Activated CD4-positive, alpha-beta T cell treated with anti-CD3 and anti-CD28 coated beads for 36 hours (primary cell): ENCODE measurements at regions of chr12 and their contacts with region 1.

Region 1: GRCh38 chr12:96177013-96177412 is 17.2 kb upstream of the ELK3 start:
- DNase-seq: peak; percentile 88
- ATAC-seq: peak; percentile 98
- H3K4me3 Mint-ChIP-seq: peak overlapping the region; percentile 18
- H3K27ac Mint-ChIP-seq: peak overlapping the region; percentile 83
- H3K4me1 Mint-ChIP-seq: peaks cover 25% of the 10 kb centered on the region
- H3K27me3 Mint-ChIP-seq: no peaks in the 10 kb centered on the region

Region 2: DNA sequence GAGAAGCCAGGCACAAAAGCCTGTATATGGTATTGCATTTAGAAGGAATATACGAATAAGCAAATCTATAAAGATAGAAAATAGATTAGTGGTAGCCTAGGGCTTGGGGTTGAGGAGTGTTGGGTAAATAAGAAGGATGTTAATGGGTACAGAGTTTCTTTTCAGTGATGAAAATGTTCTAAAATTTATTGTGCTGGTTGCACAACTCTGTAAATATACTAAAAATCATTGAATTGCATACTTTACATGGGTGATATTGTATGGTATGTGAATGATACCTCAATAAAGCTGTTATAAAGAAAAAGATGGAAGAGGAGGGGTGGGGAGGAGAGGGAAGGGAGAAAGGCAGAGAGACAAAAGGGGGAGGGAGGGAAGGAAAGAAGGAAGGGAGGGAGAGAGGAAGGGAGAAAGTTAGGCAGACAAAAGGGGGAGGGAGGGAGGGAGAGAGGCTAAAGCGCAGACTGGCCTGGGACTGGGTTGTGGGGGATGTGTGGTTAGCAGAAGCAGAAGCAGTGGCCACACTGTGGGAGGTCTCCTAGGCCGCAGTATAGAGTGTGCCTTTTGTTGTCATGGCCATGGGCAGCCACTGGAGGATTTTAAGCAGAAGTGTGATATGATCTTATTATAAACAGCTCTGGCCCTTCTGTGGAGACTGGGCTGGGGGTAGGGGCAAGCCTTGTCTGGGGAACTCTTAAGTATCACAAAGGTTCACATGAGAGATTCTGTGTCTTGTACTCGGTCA is 56.5 kb before region 1 on chr12:
- CTCF ChIA-PET with region 1: interaction called, 3 read pairs
- POLR2A ChIA-PET with region 1: no interaction called
- intact Hi-C with region 1: loop called in 1 of 2 experiments (anchors 2 kb)
- DNase-seq: no peak
- ATAC-seq: peak; percentile 16
- H3K4me3 Mint-ChIP-seq: no peak overlapping the region
- H3K27ac Mint-ChIP-seq: no peak overlapping the region
- H3K4me1 Mint-ChIP-seq: peaks cover 12% of the 10 kb centered on the region
- H3K27me3 Mint-ChIP-seq: no peaks in the 10 kb centered on the region

Region 3: DNA sequence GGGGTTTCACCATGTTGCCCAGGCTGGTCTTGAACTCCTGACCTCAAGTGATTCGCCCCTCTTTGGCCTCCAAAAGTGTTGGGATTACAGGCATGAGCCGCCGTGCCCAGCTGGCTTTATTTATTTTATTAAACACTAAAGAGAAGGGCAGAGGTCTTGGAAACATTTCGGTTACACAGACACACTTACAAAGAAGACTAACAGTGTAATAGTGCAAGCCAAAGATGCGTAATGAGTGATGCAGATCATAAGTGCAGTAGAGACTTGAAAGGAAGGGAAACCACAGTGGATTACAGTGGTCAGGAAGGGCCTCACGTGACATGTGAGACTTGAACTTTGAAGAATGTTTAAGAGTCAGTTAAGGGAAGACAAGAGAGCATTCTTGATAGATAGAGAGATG is 257.1 kb after region 1 on chr12:
- CTCF ChIA-PET with region 1: no interaction called
- POLR2A ChIA-PET with region 1: no interaction called
- intact Hi-C with region 1: loop called in 1 of 2 experiments (anchors 1 kb)
- DNase-seq: peak; percentile 85
- ATAC-seq: peak; percentile 99
- H3K4me3 Mint-ChIP-seq: peak overlapping the region; percentile 17
- H3K27ac Mint-ChIP-seq: peak overlapping the region; percentile 83
- H3K4me1 Mint-ChIP-seq: peaks cover 26% of the 10 kb centered on the region
- H3K27me3 Mint-ChIP-seq: no peaks in the 10 kb centered on the region